Activated T-helper 1 cell treated with anti-CD3 and anti-CD28 coated beads, Interleukin-12 subunit alpha, Interleukin-12 subunit beta, Interleukin-2, Interleukin-4 antibody, amounts not matched to agents 30 ng/mL and 10 ng/mL and 1 ng/mL, durations not matched to agents 14 hours and 24 hours and 36 hours (primary cell): ENCODE measurements at regions of chr14 and their contacts with region 1.

Region 1: DNA sequence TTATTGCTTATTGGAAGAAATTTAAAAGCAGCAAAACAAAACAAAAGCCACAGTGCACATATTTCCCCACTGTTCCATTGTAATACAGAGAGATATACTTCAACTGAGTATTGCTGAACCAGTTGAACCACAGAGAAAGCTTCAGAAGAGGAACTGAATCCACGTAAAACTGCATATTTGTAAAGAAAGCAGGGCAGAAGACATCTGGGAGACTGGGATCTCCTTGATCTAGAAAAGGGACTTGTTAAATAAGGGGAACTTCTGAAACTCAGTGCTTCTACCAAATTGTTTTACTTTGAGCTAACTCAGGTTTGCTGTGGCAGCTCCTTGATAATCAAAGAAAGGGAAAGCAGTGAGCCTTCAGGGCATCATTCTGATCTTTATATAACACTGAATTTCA is 411.1 kb upstream of the MDGA2 start:
- DNase-seq: no peak
- H3K4me3 Mint-ChIP-seq: no peak overlapping the region
- H3K27ac Mint-ChIP-seq: no peak overlapping the region
- H3K4me1 Mint-ChIP-seq: no peaks in the 10 kb centered on the region
- H3K27me3 Mint-ChIP-seq: no peaks in the 10 kb centered on the region

Region 2: DNA sequence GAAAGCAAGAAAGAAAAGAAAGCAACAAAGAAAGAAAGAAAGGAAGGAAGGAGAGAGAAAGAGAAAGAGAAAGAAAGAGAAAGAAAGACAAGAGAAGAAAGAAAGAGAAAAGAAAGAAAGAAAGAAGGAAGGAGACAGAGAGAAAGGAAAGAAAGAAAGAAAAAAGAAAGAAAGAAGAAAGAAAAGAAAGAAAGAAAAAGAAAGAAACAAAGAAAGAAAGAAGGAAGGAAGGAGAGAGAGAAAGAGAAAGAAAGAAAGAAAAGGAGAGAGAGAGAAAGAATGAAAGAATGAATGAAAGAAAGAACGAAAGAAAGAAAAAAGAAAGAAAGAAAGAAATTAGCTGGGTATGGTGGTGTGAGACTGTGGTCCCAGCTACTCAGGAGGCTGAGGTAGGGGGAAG is 11.0 kb before region 1 on chr14:
- intact Hi-C with region 1: loop called (anchors 1 kb)
- DNase-seq: no peak
- H3K4me3 Mint-ChIP-seq: no peak overlapping the region
- H3K27ac Mint-ChIP-seq: no peak overlapping the region
- H3K4me1 Mint-ChIP-seq: no peaks in the 10 kb centered on the region
- H3K27me3 Mint-ChIP-seq: no peaks in the 10 kb centered on the region